ENCODE measurements at regions of chr3 and their contacts with region 1.

Region 1: DNA sequence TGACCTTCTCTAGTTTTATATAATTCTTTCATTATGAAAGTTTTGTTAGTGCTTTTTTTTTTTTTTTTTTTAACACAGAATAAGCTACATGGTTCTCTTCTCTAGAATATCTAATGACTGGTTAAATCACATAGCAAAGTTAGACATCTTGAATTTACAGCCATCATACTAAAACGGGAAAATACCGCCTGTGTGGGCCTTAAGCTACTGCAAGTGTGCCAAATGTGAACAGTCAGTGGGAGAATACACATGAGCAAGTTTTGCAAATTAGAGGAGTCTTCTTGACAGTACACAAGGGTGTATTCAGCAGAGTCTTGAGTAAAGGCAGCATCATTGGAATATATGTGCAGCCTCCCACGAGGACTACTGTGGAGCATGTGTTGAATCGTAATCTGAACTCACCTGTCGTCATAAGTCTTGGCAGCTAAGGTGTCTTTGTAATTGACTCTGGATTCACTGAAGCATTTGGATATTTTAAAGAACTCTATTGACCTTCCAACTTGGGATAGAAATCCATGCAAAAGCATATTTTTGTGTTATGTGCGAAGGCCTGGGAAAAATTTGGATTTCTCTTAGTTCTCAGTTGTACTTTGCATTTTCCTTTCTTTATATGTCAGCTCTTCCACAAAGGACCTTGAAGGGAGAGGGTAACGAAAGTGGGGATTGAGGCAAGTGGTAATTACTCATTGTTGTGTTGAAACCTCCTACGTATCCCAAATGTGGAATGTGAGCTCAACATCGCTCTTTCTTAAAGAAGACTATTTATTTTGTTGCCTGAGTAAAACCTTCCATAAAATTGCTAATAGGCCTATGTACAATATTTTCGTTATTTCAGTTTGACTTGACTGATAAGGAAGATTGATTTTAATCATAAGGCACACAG is 117.4 kb downstream of the ATG7 start:
- DNase-seq: no peak
- H3K4me3 ChIP-seq: no peak overlapping the region
- H3K27ac ChIP-seq: no peak overlapping the region
- H3K4me1 ChIP-seq: peaks cover 5% of the 10 kb centered on the region
- H3K27me3 ChIP-seq: no peaks in the 10 kb centered on the region
- CTCF ChIP-seq: no peak

Region 2: DNA sequence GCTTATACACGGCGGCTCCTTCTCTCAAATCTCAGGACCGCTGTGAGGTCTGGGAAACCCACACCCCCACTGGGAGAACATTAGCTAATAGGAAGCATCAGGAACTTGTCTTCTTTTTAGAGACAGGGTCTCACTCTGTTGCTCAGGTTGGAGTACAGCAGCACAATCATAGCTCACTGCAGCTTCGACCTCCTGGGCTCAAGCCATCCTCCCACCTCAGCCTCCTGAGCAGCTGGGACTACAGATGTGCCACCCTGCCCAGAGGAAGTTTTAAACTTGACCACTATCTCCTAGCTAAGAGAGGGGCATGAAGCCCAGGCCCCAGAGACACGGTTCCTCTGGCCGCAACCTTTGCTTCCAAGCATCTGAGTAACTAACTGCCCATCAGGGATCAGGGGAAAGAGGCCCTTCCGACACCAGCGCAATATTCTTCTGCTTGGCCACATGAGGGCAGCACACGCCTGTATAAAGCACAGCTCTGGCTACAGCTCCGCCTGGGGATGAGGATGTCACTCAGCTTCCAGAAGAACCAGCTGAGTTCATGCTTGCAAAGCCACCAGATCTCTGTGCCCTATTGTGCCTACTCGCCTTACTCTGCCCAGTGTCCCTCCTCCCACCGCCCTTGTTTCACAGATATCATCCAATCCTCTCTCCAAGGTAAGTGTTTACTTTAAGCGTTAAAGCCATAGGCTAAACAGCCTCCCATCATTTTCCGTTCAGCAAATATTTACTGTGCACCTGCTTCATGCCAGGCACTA is 631.1 kb before region 1 on chr3:
- CTCF ChIA-PET with region 1: no interaction called
- POLR2A ChIA-PET with region 1: no interaction called
- intact Hi-C with region 1: no loop called
- DNase-seq: peak; percentile 70
- H3K4me3 ChIP-seq: no peak overlapping the region
- H3K27ac ChIP-seq: no peak overlapping the region
- H3K4me1 ChIP-seq: no peaks in the 10 kb centered on the region
- H3K27me3 ChIP-seq: peaks cover 4% of the 10 kb centered on the region
- CTCF ChIP-seq: peak; percentile 76

Region 3: DNA sequence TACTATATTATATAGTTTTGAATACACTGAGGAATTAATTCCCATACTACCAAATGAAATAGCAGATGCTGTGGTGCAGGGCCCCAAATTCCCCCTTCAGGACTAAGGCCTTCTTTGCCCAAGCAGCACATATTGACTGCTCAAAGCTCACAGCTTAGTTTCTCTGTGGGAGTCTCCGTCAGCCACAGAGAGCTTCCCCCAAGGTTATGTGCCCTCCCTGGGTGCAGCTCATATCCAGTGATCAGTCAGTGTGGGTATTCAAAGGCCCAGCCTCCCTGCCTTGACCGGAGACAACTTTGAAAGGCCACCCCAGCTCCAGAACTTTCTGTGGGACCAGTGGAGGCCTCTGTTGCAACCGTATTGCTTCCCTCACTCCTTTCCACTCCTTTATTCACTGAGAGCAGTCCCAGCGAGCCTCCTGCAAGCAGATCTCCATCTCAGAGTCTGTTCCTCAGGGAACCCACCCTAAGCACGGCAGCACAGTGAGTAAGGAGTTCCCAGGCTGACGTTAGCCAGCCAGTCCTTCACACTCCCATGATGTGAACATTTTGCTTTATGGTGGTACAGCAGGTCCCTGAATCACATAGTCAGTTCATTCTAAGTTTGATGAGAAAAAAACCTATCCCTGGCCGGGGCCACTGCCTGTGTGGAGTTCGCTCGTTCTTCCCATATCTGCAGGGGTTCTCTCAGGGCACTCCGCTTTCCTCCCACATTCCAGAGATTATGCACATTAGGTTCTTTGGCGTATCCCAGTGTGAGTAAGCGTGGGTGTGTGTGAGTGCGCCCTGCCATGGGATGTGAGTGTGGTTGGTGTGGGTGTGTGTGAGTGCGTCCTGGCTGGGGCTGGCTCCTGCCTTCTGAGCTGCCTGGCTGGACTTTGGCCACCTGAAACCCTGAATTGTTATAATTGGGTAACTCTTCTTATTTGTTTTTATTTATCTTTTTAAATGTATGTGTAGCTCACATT is 834.8 kb after region 1 on chr3:
- CTCF ChIA-PET with region 1: no interaction called
- POLR2A ChIA-PET with region 1: interaction called, 11 read pairs
- intact Hi-C with region 1: no loop called
- DNase-seq: peak; percentile 1
- H3K4me3 ChIP-seq: no peak overlapping the region
- H3K27ac ChIP-seq: no peak overlapping the region
- H3K4me1 ChIP-seq: no peaks in the 10 kb centered on the region
- H3K27me3 ChIP-seq: no peaks in the 10 kb centered on the region
- CTCF ChIP-seq: no peak